Thyroid gland (tissue), 4 donors: ENCODE measurements at regions of chr20 and their contacts with region 1.

Region 1: GRCh38 chr20:34562643-34563042 is 4.1 kb downstream of the MAP1LC3A start:
- DNase-seq: peak; percentile 22 to 34
- H3K4me3 ChIP-seq: no peak overlapping the region
- H3K27ac ChIP-seq: no peak overlapping the region
- H3K4me1 ChIP-seq: peaks cover 4 to 13% of the 10 kb centered on the region in 2 donors
- H3K27me3 ChIP-seq: no peaks in the 10 kb centered on the region
- CTCF ChIP-seq: peak; percentile 16 to 46 (median 34)
- POLR2A ChIP-seq: no peak

Region 2: DNA sequence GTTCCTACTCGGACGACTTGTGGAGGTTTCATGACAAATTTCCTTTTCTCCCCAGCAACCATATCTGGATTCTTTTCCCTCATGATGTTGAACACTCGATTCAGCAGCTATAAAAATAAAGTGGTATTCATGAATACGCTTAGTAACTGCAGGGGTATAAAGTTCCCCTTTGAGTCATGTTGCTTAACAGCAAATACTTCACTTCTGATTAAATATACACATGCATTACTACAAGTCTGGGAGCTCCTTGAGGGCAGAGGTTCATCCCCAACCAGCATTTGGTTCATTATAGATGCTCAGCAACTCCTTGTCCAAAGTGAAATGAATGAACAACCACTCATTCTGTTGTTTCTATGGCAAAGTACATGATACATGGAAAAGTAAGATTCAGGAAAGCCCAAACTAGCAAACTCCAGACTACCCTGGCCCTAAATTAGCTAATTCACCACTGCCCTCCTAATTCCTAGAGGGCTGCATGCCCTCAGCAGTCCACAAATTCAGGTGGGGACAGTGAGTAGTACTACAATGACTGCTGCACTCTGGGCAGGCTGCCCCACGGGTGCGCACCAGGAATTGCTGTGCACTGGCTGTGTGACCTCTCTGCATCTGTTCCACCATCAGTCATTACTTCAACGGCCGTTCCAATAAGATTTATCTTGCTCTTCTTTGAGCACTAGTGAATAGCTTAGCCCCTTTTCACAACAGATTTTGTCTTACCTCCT is 465.8 kb before region 1 on chr20:
- intact Hi-C with region 1: no loop called
- DNase-seq: no peak
- H3K4me3 ChIP-seq: no peak overlapping the region
- H3K27ac ChIP-seq: no peak overlapping the region
- H3K4me1 ChIP-seq: no peaks in the 10 kb centered on the region
- H3K27me3 ChIP-seq: no peaks in the 10 kb centered on the region
- CTCF ChIP-seq: no peak
- POLR2A ChIP-seq: no peak

Region 3: DNA sequence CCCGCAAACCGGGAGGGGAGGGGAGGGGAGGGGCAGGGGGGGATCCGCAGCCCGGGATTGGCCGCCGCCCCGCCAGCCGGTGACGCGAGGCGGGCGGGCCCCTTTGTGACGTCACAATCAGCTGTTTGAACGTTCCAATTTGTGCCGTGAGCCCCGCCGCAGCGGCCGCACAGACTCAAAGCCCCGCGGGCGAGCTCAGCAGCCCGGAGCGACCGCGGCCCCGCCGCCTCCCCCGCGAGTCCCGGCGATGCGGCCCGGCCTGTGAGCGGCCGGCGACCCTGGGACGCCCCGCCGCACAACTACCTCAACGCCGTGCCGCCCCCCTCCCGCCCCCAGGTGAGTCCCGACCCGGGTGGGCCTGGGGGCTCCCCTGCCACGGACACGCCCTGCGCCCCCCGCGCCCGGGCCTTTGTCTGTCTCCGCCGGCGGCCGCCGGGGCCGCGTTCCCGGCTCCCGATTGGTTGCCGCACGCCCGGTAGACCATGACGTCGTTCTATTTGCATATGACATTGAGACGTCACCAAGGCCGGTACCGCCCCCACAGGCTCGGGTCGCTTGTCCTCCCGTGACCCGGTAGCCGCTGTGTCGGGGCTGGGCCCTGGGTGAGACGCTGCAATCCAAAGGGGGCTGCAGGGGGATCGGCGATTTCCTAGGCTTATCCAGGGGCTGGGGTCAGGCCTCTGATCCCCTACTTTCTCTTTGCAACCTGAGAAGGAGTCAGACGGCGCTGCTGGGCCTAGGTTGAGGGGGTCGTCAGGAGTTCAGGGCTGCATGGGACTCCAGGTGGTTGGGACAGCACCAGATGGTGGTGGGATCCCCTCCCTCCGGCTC is 141.7 kb after region 1 on chr20 and contains the start of gene TP53INP2:
- intact Hi-C with region 1: loop called (anchors 5 kb)
- DNase-seq: peak; percentile 98
- H3K4me3 ChIP-seq: peak within 1 kb of the TSS; percentile 29 to 99 (median 77)
- H3K27ac ChIP-seq: peak within 1 kb of the TSS; percentile 98 to 100 (median 100)
- H3K4me1 ChIP-seq: peaks cover 27 to 37% of the 10 kb centered on the region in 2 donors
- H3K27me3 ChIP-seq: no peaks in the 10 kb centered on the region
- CTCF ChIP-seq: no peak
- POLR2A ChIP-seq: peak; percentile 66 to 96
- total RNA-seq, gene TP53INP2: 21.9 to 39.7 (median 31.2) TPM

Region 4: DNA sequence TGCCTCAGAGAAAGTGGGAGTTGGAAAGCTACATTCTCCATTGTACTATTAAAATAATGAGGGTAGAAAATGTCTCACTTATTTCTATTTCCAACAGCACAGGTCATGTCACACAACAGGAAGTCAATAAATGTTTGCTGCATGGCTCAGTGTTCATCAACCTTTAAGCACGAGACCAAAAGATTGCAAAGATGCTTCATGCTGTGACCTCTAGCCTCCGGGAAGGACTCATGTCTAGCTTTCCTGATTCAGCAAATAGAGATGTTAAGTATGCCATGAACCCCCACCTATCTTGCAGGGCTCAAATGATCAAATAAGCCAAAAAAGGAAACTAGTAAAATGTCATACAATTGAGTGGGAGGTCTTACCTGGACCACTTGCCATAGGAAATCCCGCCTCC is 205.5 kb after region 1 on chr20:
- intact Hi-C with region 1: loop called (anchors 10 kb)
- DNase-seq: no peak
- H3K4me3 ChIP-seq: no peak overlapping the region
- H3K27ac ChIP-seq: no peak overlapping the region
- H3K4me1 ChIP-seq: peaks cover 13 to 22% of the 10 kb centered on the region in 2 donors
- H3K27me3 ChIP-seq: no peaks in the 10 kb centered on the region
- CTCF ChIP-seq: no peak
- POLR2A ChIP-seq: no peak